ENCODE measurements at regions of chr3 and their contacts with region 1.

Region 1: GRCh38 chr3:180802837-180803236 is 109.6 kb upstream of the FXR1 start:
- DNase-seq: no peak
- H3K4me3 ChIP-seq: no peak overlapping the region
- H3K27ac ChIP-seq: no peak overlapping the region
- H3K27me3 ChIP-seq: no peaks in the 10 kb centered on the region
- CTCF ChIP-seq: peak in 55 of 56 donors; percentile 29 to 82 (median 67)

Region 2: GRCh38 chr3:180837262-180837661 is 34.4 kb after region 1 on chr3:
- intact Hi-C with region 1: no loop called
- DNase-seq: no peak
- H3K4me3 ChIP-seq: no peak overlapping the region
- H3K27ac ChIP-seq: no peak overlapping the region
- H3K27me3 ChIP-seq: no peaks in the 10 kb centered on the region
- CTCF ChIP-seq: no peak

Region 3: DNA sequence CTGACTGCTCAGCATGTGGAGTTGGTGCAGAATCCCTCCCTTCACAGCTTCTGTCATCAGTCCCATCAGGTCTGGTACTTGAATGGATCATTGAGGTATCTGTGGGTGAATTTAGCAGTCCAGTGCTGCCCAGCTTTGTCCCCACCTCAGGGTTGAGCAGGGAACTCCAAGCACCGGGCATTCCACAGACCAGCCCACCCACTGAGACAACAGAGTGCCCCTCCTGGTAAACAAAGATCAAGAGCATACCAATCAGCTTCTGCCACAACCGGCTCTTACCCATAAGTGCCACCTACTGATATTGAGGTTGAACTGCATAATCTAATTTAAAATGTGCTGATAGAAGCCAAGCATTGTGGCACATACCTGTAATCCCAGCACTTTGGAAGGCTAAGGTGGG is 52.5 kb after region 1 on chr3:
- intact Hi-C with region 1: loop called in 1 of 2 experiments (anchors 10 kb)
- DNase-seq: no peak
- H3K4me3 ChIP-seq: no peak overlapping the region
- H3K27ac ChIP-seq: no peak overlapping the region
- H3K27me3 ChIP-seq: peaks cover 0 to 3% (median 0%) of the 10 kb centered on the region in 45 donors
- CTCF ChIP-seq: peak in 15 of 56 donors; percentile 9 to 38 (median 19)

Region 4: GRCh38 chr3:180912304-180913296 is 109.8 kb after region 1 on chr3 and contains the start of gene FXR1:
- intact Hi-C with region 1: loop called in 1 of 2 experiments (anchors 10 kb)
- DNase-seq: peak; percentile 80 to 94 (median 90)
- H3K4me3 ChIP-seq: peak within 1 kb of the TSS; percentile 76 to 99 (median 95)
- H3K27ac ChIP-seq: peak within 1 kb of the TSS; percentile 91 to 99 (median 98)
- H3K27me3 ChIP-seq: no peaks in the 10 kb centered on the region
- CTCF ChIP-seq: peak; percentile 53 to 93 (median 80)
- total RNA-seq, gene FXR1: 110 to 275 (median 151) TPM

Region 5: DNA sequence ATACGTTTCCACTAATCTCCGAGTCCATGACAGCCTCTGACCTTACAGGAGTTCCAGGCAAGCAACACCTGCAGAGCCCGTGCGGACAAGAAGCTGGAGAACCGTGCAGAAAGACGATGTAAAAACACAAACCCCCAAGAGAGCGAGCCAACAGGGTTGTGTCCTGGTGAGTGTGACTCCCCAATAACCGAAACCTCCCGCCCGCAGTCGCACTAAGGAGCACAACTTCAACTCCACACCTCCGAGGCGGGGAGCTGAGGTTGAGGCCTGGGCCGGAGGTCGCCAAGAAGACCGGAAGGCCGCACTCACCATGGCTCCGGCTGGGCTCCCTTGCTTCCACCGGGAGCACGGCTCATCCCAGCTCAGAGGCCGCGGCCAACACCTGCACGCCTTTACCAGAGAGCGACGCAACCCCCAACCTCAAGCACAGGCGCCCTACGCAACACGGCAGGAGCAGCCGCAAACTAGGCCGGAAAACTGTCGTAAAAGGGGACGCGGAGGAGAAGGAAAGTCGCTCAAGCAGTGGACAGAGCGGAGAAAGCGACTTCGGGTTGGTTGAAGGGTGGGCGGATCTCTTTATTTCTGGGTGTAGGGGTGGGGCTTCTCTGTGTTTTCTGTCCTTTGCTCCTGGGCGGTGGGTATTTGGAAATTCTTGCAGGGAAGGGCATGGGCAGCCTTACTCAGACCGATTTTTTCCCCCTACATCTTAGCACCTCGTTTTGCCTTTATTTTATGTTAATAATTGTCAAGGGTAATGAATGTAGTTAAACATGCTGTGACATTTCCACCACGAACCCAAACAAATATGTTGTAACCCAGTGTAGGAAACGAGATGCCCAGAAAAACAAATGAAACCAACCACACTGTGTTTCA is 186.7 kb after region 1 on chr3 and contains the start of gene DNAJC19:
- intact Hi-C with region 1: loop called in 1 of 2 experiments (anchors 10 kb)
- DNase-seq: peak; percentile 78 to 96 (median 94)
- H3K4me3 ChIP-seq: peak within 1 kb of the TSS; percentile 49 to 98 (median 88)
- H3K27ac ChIP-seq: peak within 1 kb of the TSS; percentile 13 to 95 (median 86)
- H3K27me3 ChIP-seq: no peaks in the 10 kb centered on the region
- CTCF ChIP-seq: peak in 27 of 56 donors; percentile 6 to 57 (median 17)
- total RNA-seq, gene DNAJC19: 26.3 to 63.9 (median 46.2) TPM

Region 6: GRCh38 chr3:181176601-181177000 is 373.8 kb after region 1 on chr3:
- intact Hi-C with region 1: loop called in 1 of 2 experiments (anchors 2 kb)
- DNase-seq: peak; percentile 21 to 82 (median 56)
- H3K4me3 ChIP-seq: peak overlapping the region in 35 of 59 donors; percentile 4 to 55 (median 28)
- H3K27ac ChIP-seq: no peak overlapping the region
- H3K27me3 ChIP-seq: peaks cover 0 to 4% (median 0%) of the 10 kb centered on the region in 45 donors
- CTCF ChIP-seq: peak; percentile 26 to 85 (median 69)

Region 7: GRCh38 chr3:182683453-182683852 is 1880.6 kb after region 1 on chr3:
- intact Hi-C with region 1: loop called (anchors 10 kb)
- DNase-seq: peak in 9 of 10 donors; percentile 35 to 85 (median 63)
- H3K4me3 ChIP-seq: peak overlapping the region in 58 of 59 donors; percentile 21 to 84 (median 72)
- H3K27ac ChIP-seq: peak overlapping the region in 55 of 59 donors; percentile 12 to 86 (median 75)
- H3K27me3 ChIP-seq: peaks cover 0 to 27% (median 2%) of the 10 kb centered on the region in 45 donors
- CTCF ChIP-seq: peak; percentile 76 to 99 (median 93)